MCF 10A (cell line): ENCODE measurements at regions of chr1 and their contacts with region 1.

Region 1: DNA sequence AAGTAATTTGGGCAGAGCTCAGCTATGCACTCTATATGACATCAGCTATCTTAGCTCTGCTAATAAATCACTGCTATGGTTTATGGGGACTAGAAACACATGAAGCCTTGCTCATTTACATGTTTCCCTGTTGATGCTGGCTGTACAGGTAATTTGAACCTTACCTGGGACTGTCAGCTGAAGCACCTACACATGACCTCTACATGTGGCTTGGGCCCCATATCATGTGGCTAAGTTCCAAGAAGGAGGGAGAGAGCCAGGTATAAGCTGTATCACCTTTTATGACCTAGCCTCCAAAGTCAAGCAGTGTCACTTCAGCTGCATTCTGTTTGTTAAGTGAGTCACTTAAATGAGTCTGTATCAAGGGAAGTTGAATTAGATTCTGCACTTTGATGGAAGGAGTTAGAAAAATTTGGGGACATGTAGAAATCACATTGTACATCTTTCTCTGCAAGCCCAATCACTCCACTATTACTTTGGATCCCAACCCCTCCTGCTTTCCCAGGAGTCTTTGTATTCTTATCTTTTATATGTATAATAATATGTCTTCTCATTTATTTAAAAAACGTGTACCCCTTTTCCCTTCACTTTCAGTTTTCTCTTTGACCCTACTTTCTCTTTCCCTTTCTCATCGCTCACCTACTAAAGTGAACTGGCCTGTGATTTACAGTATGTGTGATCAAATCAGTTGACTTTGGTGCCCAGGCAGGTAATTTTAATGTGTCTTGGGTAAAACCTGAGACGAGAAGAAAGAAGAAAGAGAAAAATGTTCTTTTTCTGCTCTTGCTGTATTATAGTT is 53.4 kb upstream of the PRKACB start:
- DNase-seq: no peak
- H3K4me3 Mint-ChIP-seq: no peak overlapping the region
- H3K27ac Mint-ChIP-seq: no peak overlapping the region
- H3K4me1 Mint-ChIP-seq: peaks cover 11% of the 10 kb centered on the region
- H3K27me3 Mint-ChIP-seq: no peaks in the 10 kb centered on the region
- CTCF ChIP-seq: no peak

Region 2: GRCh38 chr1:84077476-84078107 is 13.1 kb before region 1 on chr1:
- CTCF ChIA-PET with region 1: interaction called, 3 read pairs
- POLR2A ChIA-PET with region 1: interaction called, 19 read pairs
- intact Hi-C with region 1: no loop called
- DNase-seq: peak; percentile 65
- H3K4me3 Mint-ChIP-seq: peak overlapping the region; percentile 86
- H3K27ac Mint-ChIP-seq: peak overlapping the region; percentile 83
- H3K4me1 Mint-ChIP-seq: peaks cover 11% of the 10 kb centered on the region
- H3K27me3 Mint-ChIP-seq: no peaks in the 10 kb centered on the region
- CTCF ChIP-seq: no peak

Region 3: GRCh38 chr1:84103197-84103992 is 12.7 kb after region 1 on chr1:
- CTCF ChIA-PET with region 1: no interaction called
- POLR2A ChIA-PET with region 1: interaction called, 12 read pairs
- intact Hi-C with region 1: no loop called
- DNase-seq: peak; percentile 77
- H3K4me3 Mint-ChIP-seq: no peak overlapping the region
- H3K27ac Mint-ChIP-seq: peak overlapping the region; percentile 69
- H3K4me1 Mint-ChIP-seq: peaks cover 27% of the 10 kb centered on the region
- H3K27me3 Mint-ChIP-seq: no peaks in the 10 kb centered on the region
- CTCF ChIP-seq: no peak